Vagina (tissue), 2 donors: ENCODE measurements at regions of chr13 and their contacts with region 1.

Region 1: GRCh38 chr13:91632091-91632490 is 233.7 kb downstream of the GPC5 start:
- DNase-seq: no peak
- H3K4me3 ChIP-seq: no peak overlapping the region
- H3K27ac ChIP-seq: no peak overlapping the region
- H3K4me1 ChIP-seq: no peaks in the 10 kb centered on the region
- H3K27me3 ChIP-seq: no peaks in the 10 kb centered on the region
- CTCF ChIP-seq: no peak
- POLR2A ChIP-seq: no peak

Region 2: DNA sequence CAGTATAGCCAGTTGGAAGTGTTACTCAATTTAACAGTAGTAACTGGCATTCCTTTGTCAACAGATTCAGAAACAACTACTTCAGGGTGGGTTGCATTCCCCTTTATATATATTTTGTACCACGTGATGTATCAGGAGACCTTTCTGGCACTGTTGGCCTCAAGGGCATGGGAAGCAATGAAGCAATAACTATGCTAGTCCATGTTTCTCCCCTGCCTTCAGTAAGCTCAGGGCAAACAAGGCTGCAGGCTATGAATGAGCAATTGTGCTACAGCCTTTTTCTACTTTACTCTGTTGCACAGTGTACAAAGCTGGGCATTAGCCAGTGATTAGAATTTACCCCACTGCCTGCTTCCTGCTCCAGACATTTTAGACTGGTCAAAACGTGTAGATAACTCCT is 115.1 kb after region 1 on chr13:
- intact Hi-C with region 1: loop called (anchors 5 kb)
- DNase-seq: no peak
- H3K4me3 ChIP-seq: no peak overlapping the region
- H3K27ac ChIP-seq: no peak overlapping the region
- H3K4me1 ChIP-seq: no peaks in the 10 kb centered on the region
- H3K27me3 ChIP-seq: no peaks in the 10 kb centered on the region
- CTCF ChIP-seq: no peak
- POLR2A ChIP-seq: no peak